Motor neuron (in vitro differentiated cells): ENCODE measurements at regions of chr2 and their contacts with region 1.

Region 1: GRCh38 chr2:109128048-109128465 is 948 bp upstream of the SH3RF3 start:
- ATAC-seq: peak; percentile 64 to 94 (median 77)
- H3K4me3 ChIP-seq: peak overlapping the region; percentile 40 to 64 (median 46)
- H3K27ac ChIP-seq: no peak overlapping the region
- H3K4me1 ChIP-seq: peaks cover 8% of the 10 kb centered on the region in 2 donors

Region 2: DNA sequence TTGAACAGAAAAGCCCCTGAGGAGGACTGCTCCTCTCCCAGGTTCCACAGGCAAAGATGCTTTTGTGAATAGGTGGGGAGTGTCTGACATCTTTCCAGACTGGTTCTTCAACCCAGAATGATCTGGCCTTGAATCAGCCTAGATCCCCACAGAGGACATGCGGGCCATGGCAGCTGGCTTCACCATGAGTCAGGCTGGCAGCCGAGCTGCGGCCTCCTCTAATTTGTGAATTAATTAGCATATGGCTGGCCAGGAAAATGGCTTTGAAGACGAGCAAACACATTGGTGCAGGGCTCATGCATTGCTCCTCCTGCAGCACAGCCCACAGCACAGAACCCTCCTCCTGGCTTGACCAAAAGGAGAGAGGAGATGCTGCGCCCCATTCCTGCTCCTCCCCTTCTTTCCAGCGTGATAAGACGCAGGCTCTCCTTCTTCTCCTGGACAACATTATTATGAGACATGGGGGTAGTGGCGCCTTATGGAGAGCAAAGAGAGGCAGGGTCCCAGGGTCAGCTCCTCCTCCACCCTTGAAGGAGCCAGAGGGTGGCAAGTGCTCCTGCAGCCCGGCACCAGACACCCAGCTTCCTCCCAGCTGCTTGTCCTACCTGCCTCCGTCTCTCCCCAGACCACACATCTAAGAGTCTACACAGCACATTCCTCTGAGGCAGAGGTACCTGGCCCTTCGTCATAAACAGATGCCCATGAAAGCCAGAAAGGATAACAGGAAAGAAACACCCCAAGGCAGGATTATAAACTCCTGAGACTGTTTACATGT is 205.7 kb before region 1 on chr2:
- in situ Hi-C with region 1: loop called in 1 of 9 experiments (anchors 25 kb)
- ATAC-seq: peak; percentile 59 to 96 (median 82)
- H3K4me3 ChIP-seq: no peak overlapping the region
- H3K27ac ChIP-seq: no peak overlapping the region
- H3K4me1 ChIP-seq: peaks cover 7 to 11% of the 10 kb centered on the region in 2 donors

Region 3: GRCh38 chr2:108968619-108969018 is 159.4 kb before region 1 on chr2:
- in situ Hi-C with region 1: no loop called
- ATAC-seq: peak; percentile 36 to 76 (median 55)
- H3K4me3 ChIP-seq: no peak overlapping the region
- H3K27ac ChIP-seq: no peak overlapping the region
- H3K4me1 ChIP-seq: peaks cover 9 to 18% of the 10 kb centered on the region in 2 donors

Region 4: GRCh38 chr2:109031476-109032228 is 96.4 kb before region 1 on chr2:
- in situ Hi-C with region 1: no loop called
- ATAC-seq: peak; percentile 16 to 96 (median 62)
- H3K4me3 ChIP-seq: peak overlapping the region in 1 of 5 donors; percentile 11
- H3K27ac ChIP-seq: no peak overlapping the region
- H3K4me1 ChIP-seq: peaks cover 13 to 21% of the 10 kb centered on the region in 2 donors

Region 5: GRCh38 chr2:109284826-109285225 is 156.8 kb after region 1 on chr2:
- in situ Hi-C with region 1: loop called in 1 of 9 experiments (anchors 25 kb)
- ATAC-seq: peak in 7 of 8 experiments; percentile 21 to 80 (median 51)
- H3K4me3 ChIP-seq: no peak overlapping the region
- H3K27ac ChIP-seq: no peak overlapping the region
- H3K4me1 ChIP-seq: peaks cover 58 to 59% of the 10 kb centered on the region in 2 donors

Region 6: GRCh38 chr2:109312892-109313291 is 184.8 kb after region 1 on chr2:
- in situ Hi-C with region 1: no loop called
- ATAC-seq: no peak
- H3K4me3 ChIP-seq: no peak overlapping the region
- H3K27ac ChIP-seq: no peak overlapping the region
- H3K4me1 ChIP-seq: peaks cover 7 to 15% of the 10 kb centered on the region in 2 donors

Region 7: DNA sequence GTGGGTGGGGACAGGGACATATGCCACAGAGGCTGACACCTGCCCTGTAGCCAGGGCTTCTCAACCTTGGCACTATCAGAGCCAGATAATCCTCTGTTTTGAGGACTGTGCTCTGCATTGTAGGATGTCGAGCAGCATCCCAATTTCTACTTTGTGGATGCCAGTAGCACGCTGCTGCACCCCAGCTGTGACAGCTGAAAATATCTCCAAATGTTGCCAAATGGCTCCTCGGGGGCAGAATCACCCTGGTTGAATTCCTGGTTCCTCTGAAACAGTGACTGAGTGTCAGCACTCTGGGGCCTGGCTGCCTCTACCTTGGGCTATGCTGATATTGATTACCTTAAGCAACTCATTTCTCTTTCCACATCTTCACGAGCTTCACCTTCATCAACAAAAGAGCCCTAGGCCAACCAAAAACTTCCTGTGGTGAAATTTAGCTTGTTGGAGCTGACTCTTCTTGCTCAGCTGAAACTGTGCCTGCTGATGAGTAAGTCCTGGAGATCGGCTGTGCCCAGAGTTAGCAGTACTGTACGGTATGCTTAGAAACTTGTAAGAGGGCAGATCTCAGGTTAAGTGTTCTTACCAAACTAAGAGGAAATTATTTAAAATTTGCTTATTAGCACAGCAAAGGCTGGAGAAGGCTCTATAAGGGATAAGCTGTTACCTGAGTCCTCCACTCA is 347.6 kb after region 1 on chr2:
- in situ Hi-C with region 1: loop called in 1 of 9 experiments (anchors 25 kb)
- ATAC-seq: no peak
- H3K4me3 ChIP-seq: no peak overlapping the region
- H3K27ac ChIP-seq: no peak overlapping the region
- H3K4me1 ChIP-seq: peaks cover 34 to 40% of the 10 kb centered on the region in 2 donors

Region 8: DNA sequence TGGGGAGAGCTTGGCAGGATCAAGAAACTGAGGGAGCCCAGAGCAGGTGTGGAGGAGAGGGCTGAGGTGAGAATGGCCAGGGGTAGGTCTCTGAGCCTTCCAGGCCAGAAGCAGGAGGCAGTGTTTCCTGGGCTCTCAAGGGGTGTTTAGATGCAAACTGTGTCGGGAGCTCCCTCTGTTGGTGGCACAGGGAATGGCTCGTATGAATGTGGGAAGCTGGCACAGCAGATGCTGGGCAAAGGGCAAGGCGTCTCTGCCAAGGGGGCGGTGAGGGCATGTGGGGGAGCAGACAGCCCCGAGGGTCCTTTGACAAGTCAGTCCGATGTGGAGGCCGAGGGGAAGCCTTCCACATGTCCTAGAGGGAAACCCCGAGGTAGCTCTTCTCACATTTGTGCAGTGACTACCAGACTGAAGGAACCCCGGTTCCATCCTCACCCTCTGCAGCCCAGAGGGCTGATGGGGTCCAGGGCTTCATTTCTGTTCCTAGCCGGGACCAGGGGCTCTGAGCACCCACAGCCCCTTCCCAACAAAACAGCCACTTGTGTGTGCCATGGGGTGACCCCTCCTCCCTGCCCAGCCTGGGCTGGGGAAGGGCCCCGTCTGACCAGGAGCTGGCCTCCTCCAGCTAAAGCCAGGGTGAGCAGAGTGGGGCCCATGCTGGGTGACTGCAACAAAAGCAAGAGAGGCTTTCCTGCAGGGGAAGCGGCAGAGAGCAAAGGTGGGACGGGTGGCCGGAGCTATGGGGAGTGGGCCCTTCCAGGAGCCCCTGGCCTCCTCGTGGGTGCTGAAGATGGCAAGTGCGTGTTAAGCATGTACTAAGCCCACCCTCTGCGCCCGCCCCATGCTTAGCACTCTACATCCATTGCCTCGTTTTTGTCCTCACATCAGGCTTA is 382.3 kb after region 1 on chr2:
- in situ Hi-C with region 1: loop called in 7 of 9 experiments (anchors 10 to 25 kb)
- ATAC-seq: peak; percentile 42 to 91 (median 61)
- H3K4me3 ChIP-seq: no peak overlapping the region
- H3K27ac ChIP-seq: no peak overlapping the region
- H3K4me1 ChIP-seq: peaks cover 6 to 11% of the 10 kb centered on the region in 2 donors